Naive thymus-derived CD8-positive, alpha-beta T cell (primary cell): ENCODE measurements at regions of chr17 and their contacts with region 1.

Region 1: GRCh38 chr17:38799378-38800236 is at the start of gene PIP4K2B:
- DNase-seq: peak; percentile 69 to 90 (median 80)
- ATAC-seq: peak; percentile 76
- H3K4me3 Mint-ChIP-seq: peak within 1 kb of the TSS; percentile 87 to 98 (median 94)
- H3K27ac Mint-ChIP-seq: peak within 1 kb of the TSS; percentile 81 to 96 (median 94)
- H3K4me1 Mint-ChIP-seq: peaks cover 31 to 44% (median 43%) of the 10 kb centered on the region in 4 donors
- H3K27me3 Mint-ChIP-seq: no peaks in the 10 kb centered on the region
- polyA plus RNA-seq, gene PIP4K2B: 11.8 to 17.8 (median 16.5) TPM

Region 2: DNA sequence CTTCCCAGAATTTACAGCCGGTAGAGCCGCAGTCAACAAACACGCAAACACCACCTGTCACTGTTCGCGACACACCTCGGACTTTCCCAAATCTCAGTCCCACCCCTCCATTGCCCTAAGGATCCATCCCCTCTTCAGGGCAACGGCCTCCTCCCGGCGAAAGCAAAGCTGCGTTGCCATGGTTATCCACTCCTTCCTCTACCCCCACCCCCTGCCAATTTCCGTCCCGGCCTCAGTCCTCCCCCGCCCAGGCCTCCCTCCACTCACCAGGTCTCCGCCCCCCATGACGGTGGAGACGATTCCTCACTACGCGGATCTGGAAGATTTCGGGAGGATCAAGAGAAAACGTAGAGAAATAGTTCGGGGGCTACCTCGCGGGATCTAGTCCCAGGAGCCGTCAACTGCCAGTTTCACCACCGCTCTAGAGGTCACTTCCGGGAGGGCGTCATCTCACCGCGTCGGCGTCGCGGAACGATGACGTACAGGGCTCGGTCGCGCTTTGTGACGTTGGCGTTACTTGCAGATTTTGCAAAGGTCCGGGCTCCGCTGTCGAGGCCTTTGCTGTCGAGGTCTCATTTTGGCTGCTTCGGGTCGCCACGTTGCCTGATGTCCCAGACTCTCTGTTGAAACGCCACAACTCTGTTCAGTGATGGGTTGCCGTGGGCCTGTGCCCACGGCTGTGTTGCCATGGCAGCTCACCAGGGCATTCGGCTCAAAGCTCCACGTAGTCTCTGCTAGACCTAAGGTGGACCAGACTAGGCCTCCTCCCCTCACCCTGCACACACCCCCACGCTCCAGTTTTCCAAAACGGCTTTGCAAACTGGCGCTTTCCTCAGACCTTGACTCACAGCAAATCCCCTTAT is 25.5 kb after region 1 on chr17 and contains the start of gene CWC25:
- POLR2A ChIA-PET with region 1: interaction called, 10 read pairs
- DNase-seq: peak; percentile 84 to 100 (median 96)
- ATAC-seq: peak; percentile 81 to 86
- H3K4me3 Mint-ChIP-seq: peak within 1 kb of the TSS; percentile 93 to 99 (median 97)
- H3K27ac Mint-ChIP-seq: peak within 1 kb of the TSS; percentile 97 to 100 (median 100)
- H3K4me1 Mint-ChIP-seq: peaks cover 24 to 44% (median 37%) of the 10 kb centered on the region in 4 donors
- H3K27me3 Mint-ChIP-seq: peaks cover 0 to 6% (median 0%) of the 10 kb centered on the region in 5 donors
- polyA plus RNA-seq, gene CWC25: 6.3 to 7.4 (median 6.4) TPM